Gastrocnemius medialis (tissue), 4 donors: ENCODE measurements at regions of chr11 and their contacts with region 1.

Region 1: GRCh38 chr11:20355221-20356219 is 8.0 kb upstream of the HTATIP2 start:
- DNase-seq: no peak
- ATAC-seq: no peak
- H3K4me3 ChIP-seq: no peak overlapping the region
- H3K27ac ChIP-seq: no peak overlapping the region
- H3K4me1 ChIP-seq: no peaks in the 10 kb centered on the region
- H3K27me3 ChIP-seq: no peaks in the 10 kb centered on the region
- CTCF ChIP-seq: peak in 3 of 5 experiments; percentile 21 to 45 (median 24)
- POLR2A ChIP-seq: no peak

Region 2: GRCh38 chr11:19561011-19561410 is 794.5 kb before region 1 on chr11:
- in situ Hi-C with region 1: no loop called
- intact Hi-C with region 1: loop called (anchors 10 kb)
- DNase-seq: no peak
- ATAC-seq: no peak
- H3K4me3 ChIP-seq: no peak overlapping the region
- H3K27ac ChIP-seq: no peak overlapping the region
- H3K4me1 ChIP-seq: peaks cover 0 to 9% of the 10 kb centered on the region in 2 donors
- H3K27me3 ChIP-seq: no peaks in the 10 kb centered on the region
- CTCF ChIP-seq: no peak
- POLR2A ChIP-seq: no peak

Region 3: GRCh38 chr11:19938169-19938856 is 417.2 kb before region 1 on chr11:
- in situ Hi-C with region 1: loop called in 1 of 4 experiments (anchors 25 kb)
- intact Hi-C with region 1: no loop called
- DNase-seq: no peak
- ATAC-seq: no peak
- H3K4me3 ChIP-seq: no peak overlapping the region
- H3K27ac ChIP-seq: no peak overlapping the region
- H3K4me1 ChIP-seq: no peaks in the 10 kb centered on the region
- H3K27me3 ChIP-seq: no peaks in the 10 kb centered on the region
- CTCF ChIP-seq: peak in 4 of 5 experiments; percentile 26 to 57 (median 42)
- POLR2A ChIP-seq: no peak

Region 4: DNA sequence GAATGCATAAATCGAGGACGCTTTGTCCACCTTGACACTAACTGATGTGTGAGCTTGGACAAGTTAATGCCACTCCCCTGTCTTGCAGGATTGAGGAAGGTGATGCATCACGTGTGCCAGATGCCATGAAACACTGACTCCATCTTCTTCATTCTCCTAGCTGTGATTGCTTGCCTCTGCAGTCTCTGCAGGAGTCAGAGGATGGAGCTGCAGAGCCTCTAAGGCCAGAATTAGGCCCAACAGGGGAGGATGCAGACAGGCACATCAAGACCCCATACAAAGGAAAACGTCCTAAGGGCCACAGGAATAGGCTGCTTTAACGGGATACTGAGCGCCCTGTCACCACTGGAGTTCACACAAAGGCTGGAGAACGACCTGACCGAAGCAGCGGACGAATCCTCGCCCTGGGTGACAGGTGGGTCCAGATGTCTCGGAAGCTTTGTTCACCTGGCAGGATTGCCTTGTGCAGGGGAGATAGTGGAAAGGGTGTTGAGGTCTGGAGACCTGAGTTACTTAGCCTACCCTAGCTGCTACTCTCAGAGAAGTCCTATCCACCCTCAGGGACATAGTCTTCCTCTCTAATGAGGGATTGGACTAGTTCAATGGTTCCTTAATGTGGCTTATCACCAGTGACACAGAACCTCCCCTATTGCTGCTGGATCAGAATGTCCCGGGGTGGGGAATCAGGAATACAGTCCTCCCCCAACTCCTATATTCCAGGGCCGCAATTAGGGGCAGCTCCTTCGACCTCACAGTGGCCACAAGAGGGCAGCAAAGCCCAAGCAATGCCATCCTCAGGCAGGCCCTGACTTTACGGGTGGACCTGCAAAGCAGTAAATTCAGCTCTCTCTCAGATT is 227.6 kb before region 1 on chr11:
- in situ Hi-C with region 1: loop called (anchors 5 to 10 kb)
- intact Hi-C with region 1: loop called (anchors 1 kb)
- DNase-seq: peak; percentile 17 to 45
- ATAC-seq: peak; percentile 75 to 87
- H3K4me3 ChIP-seq: no peak overlapping the region
- H3K27ac ChIP-seq: no peak overlapping the region
- H3K4me1 ChIP-seq: no peaks in the 10 kb centered on the region
- H3K27me3 ChIP-seq: no peaks in the 10 kb centered on the region
- CTCF ChIP-seq: peak; percentile 57 to 83 (median 83)
- POLR2A ChIP-seq: no peak

Region 5: GRCh38 chr11:20634044-20634443 is 278.5 kb after region 1 on chr11:
- in situ Hi-C with region 1: no loop called
- intact Hi-C with region 1: no loop called
- DNase-seq: no peak
- ATAC-seq: no peak
- H3K4me3 ChIP-seq: no peak overlapping the region
- H3K27ac ChIP-seq: no peak overlapping the region
- H3K4me1 ChIP-seq: no peaks in the 10 kb centered on the region
- H3K27me3 ChIP-seq: peaks cover 0 to 4% (median 0%) of the 10 kb centered on the region in 3 donors
- CTCF ChIP-seq: no peak
- POLR2A ChIP-seq: no peak